ENCODE measurements at regions of chr3 and their contacts with region 1.

Region 1: DNA sequence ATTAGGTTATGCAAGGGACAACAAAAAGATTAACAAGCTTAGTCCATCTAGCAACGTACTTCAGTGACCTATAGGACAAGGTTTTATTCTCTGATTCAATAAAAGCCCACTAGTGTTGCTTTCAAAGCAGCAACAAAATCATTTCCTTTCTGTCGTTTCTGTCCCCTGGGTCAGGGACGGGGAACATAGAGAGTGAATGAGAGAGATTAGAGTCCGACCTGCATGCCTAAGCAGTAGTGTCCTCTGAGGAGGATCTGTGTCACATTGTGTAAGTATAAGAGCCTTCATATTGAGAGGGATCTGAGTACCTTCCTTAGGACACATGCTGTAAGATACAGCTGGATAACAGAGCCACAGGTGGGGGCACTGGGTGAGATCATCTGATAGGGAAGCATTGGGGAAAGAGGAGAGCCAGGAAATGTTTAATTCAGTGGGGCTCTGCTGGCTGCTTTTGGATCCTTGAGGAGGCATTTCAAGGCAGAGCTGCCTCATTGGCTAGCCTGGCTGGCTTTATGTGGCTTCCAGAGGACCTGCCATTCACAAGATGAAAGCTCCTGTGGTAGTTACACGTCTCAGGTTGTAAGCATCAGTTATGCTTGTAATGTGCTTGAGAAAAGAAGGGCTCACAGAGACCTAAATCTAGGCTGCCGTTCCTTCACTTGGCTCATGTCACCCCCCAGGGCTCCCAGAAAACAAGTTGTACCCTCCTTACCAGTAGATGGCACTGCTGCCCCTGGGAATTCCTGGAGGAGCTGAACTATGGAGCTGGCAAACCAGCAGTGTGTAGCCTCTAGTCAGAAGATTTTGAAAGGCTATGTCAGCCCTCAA is 2.7 kb downstream of the TMEM108 start:
- DNase-seq: peak; percentile 66 to 97 (median 86)

Region 2: DNA sequence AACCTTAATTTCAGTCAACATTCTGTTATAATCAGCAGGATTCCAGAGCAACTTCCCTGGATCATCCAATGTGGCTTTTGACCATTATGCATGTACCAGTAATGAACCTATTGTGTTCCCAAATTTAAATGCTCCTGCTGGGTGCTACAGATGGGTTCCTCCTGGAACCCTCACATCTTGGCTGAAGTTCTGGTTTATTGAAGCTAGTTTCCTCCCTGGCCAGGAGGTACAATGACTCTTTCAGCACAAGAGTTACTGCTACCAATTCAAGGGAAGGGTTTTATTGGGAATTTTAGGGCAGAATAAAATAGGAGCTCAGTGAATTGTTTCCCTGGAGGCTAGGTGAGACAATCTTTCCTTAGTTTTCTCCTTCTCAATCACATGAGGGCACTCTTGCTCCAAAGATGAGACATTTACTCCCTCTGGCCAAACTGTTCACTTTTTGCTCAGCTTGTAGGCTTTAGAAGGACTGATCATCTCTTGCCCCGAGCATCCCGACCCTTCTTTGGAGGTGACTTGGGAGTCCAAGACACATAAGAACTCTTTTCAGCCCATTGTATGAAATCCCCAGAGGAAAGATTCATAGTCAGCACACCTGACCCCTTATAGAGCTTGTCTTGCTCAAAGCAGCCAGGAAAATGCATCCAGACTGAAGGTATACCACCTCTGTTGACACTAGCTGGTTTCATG is 309.9 kb before region 1 on chr3:
- intact Hi-C with region 1: loop called (anchors 2 kb)
- DNase-seq: peak in 3 of 10 donors; percentile 14 to 52 (median 37)

Region 3: GRCh38 chr3:133130168-133130567 is 89.3 kb after region 1 on chr3:
- intact Hi-C with region 1: no loop called
- DNase-seq: no peak

Region 4: DNA sequence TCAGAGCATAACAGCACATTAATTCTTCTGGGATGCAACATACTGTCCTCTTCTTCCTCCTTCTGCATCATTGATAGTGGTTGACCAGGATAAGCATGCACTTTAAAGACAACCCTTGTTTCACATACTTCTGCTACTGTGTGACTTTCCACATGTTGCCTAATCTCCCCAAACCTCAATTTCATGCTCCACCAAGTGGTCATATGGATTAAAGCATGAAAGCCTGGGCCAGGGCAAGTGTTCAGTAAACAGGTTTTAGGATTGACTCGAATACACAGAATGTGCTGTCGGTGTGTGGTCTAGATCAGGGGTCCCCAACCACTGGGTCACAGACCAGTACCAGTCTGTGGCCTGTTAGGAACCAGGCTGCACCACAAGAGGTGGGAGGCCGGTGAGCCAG is 336.5 kb after region 1 on chr3:
- intact Hi-C with region 1: loop called (anchors 2 kb)
- DNase-seq: no peak

Region 5: DNA sequence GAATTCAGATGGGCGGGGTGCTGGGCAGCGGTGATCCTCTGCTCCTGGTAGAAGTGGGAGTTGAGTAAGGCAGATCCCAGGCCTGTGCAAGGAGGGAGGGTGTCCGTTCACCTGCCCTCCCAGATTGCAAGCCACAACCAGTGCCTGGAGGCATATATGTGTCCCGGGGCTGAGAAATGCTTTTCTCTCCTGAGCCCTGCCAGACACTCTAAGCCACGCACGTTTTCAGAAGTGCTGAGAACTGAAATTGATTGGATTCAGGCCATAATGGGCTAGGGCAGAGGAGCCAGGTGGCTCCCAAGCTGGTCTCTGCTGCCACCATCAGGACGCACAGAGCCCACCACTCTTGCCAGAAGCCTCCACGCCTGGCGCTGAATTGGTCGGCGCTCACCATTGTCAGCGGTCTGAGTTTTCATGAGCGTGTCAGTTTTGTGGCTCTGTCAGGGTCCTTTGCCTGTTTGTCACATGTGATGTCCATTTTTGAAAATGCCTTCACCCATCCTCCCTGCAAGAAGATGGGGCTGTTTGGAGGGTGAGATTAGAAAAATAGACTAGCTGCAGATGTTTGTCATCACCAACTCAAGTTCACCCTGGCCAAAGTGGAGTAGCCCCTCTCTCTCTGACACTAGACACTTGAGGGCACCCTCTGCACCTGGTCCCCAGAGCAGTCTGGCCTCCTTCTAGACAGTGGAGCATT is 343.6 kb after region 1 on chr3:
- intact Hi-C with region 1: loop called (anchors 1 kb)
- DNase-seq: peak; percentile 56 to 96 (median 78)

Region 6: DNA sequence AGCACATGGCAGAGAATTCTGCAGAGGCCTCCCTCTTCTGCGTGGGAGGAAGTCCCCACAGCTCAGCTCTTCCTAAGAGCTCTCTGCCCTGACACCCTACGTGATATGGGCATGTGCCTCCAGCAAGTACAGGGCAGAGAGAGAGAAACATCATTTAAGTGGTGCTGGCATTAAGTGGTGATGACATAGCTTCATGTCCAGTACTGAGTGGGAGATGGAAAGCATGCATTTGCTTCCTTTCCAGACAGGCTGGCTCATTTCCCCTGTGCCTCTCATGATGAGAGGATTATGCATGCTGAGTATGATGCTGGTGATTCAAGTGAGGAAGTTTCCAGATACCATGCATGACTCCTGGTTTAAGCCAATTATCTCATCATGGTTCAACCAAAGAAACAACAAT is 385.8 kb after region 1 on chr3:
- intact Hi-C with region 1: loop called (anchors 2 kb)
- DNase-seq: no peak

Region 7: DNA sequence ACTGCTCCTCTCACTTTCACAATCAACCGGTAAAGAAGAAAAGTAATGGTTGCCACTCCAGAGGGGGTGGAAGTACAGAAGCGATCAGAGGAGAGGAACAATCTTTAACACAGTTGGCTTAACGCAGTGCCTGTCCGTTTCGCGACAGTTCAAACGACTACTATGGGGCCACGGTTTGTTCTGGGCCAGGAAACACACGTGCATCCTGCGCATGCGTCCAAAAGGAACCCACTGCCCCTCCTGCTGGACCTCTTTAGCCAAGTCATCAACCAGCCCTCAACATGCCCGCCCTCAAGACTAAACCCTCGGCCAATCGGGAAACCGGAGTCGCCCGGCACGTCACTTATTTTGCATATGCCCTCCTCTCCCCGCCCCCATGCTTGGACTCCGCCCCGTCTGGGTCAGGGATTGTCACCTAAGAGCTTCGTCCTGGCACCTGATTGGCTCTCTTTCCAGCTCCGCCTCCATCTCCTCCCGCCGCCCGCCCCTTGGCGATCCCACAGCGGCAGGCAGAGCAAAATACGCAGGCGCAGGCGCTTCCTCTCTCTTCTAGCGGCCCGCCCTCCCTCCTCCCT is 532.2 kb after region 1 on chr3:
- intact Hi-C with region 1: loop called (anchors 10 kb)
- DNase-seq: peak; percentile 100

Measured in posterior cingulate gyrus (tissue), 11 donors.